ENCODE measurements at regions of chr3 and their contacts with region 1.

Region 1: GRCh38 chr3:184543843-184544512 is 17.6 kb upstream of the EPHB3 start:
- DNase-seq: peak; percentile 81
- H3K4me3 Mint-ChIP-seq: no peak overlapping the region
- H3K27ac Mint-ChIP-seq: no peak overlapping the region
- H3K4me1 Mint-ChIP-seq: peaks cover 8% of the 10 kb centered on the region
- H3K27me3 Mint-ChIP-seq: peaks cover 22% of the 10 kb centered on the region

Region 2: DNA sequence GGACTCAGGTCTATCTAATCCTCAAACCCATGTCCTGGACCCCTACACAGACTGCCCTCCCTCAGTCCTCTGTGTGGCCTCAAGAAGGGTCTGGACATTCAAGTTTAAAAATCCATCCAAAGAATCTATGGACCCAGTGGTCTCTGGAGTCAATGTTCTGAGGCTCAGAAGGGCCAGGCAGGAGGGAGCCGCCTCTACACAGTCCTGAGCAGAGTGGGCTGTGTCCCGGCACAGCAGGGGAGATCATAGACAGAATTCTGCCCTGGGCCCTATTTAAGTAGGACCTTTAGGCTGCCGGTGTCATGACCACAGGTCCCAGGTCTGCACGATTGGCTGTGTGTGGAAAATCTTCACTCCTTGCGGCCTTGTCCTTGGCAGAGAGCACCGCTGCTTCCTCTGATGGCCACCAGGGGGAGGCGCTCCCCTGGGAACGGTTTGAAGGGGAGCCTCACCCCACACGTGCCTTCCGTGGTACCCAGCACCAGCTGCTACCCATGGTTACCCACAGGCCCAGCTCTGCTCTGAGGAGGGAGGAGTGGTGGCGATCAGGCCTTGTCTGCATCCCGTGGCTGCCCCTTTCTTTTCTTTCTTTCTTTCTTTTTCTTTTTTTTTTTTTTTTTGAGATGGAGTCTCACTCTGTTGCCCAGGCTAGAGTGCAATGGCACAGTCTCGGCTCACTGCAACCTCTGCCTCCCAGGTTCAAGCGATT is 126.2 kb before region 1 on chr3:
- CTCF ChIA-PET with region 1: interaction called, 61 read pairs
- POLR2A ChIA-PET with region 1: no interaction called
- DNase-seq: peak; percentile 73
- H3K4me3 Mint-ChIP-seq: no peak overlapping the region
- H3K27ac Mint-ChIP-seq: no peak overlapping the region
- H3K4me1 Mint-ChIP-seq: peaks cover 2% of the 10 kb centered on the region
- H3K27me3 Mint-ChIP-seq: peaks cover 5% of the 10 kb centered on the region

Region 3: DNA sequence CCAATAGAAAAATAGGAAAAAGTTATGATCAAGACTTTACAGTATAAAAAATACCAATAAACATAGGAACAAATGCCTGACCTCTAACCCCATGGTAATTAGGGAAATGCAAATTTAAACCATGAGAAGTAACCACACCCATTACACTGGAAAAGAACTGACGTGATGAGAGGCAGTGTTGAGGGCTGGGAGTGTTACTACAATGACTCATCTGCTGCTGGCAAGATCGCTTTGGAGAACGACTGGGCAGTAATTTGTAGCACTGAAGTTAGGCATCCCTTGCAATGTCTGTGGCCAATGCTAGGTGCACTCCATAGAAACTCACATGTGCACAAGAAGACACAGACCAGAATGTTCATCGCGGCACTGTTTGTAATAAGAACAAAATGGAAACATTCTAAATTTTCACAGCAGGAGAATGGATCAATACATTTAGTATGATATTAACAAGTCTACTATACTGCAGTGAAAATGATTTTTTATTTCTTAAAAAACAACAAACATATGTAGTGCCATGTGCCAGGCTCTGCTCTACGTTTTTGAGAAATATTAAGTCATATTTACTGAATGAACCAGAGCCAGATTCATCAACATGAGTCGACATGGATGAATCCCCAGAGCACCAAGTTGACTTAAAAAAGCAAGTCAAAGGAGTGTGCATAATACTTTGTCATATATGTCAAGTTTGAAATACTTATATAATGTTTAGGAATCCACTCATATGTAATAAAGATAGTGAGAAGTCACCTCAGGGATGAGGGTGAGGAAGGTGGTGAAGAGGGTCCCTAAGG is 20.0 kb before region 1 on chr3:
- CTCF ChIA-PET with region 1: interaction called, 23 read pairs
- POLR2A ChIA-PET with region 1: interaction called, 3 read pairs
- DNase-seq: peak; percentile 63
- H3K4me3 Mint-ChIP-seq: peak overlapping the region; percentile 47
- H3K27ac Mint-ChIP-seq: peak overlapping the region; percentile 81
- H3K4me1 Mint-ChIP-seq: peaks cover 26% of the 10 kb centered on the region
- H3K27me3 Mint-ChIP-seq: peaks cover 25% of the 10 kb centered on the region

Region 4: DNA sequence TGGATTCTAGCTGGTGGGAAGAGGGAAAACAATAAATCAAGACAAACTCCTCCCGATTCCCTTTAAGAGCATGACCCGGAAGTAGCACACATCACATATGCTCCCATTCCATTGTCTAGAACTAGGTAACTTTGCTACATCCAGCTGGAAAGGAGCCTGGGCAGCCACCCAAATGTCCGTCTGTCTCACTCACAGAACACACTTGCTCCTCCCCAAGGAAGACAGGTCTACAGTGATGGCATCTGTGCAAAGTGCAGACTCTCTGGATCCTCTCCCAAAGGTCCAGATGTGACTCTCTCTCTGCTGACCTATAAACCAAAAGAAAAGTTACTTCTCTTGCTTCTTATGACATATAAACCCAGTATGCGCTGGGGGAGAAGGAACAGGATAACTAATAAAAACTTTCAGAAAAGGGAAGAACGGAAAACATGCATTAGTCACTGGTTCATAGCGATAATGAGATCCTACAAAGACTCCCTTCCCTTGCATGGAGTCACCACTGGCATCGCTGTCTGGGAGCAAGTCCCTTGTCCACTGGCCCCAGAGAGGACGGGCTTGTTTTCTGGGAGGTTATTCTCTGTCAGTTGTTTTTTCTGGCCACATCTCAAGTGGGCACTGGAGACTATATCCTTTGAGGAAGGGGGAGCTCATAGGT is 12.2 kb before region 1 on chr3:
- CTCF ChIA-PET with region 1: interaction called, 25 read pairs
- POLR2A ChIA-PET with region 1: no interaction called
- DNase-seq: no peak
- H3K4me3 Mint-ChIP-seq: no peak overlapping the region
- H3K27ac Mint-ChIP-seq: no peak overlapping the region
- H3K4me1 Mint-ChIP-seq: no peaks in the 10 kb centered on the region
- H3K27me3 Mint-ChIP-seq: peaks cover 47% of the 10 kb centered on the region